Activated T-helper 1 cell treated with anti-CD3 and anti-CD28 coated beads, Interleukin-12 subunit alpha, Interleukin-12 subunit beta, Interleukin-2, Interleukin-4 antibody, amounts not matched to agents 30 ng/mL and 10 ng/mL and 1 ng/mL, durations not matched to agents 14 hours and 24 hours and 36 hours (primary cell): ENCODE measurements at regions of chr7 and their contacts with region 1.

Region 1: DNA sequence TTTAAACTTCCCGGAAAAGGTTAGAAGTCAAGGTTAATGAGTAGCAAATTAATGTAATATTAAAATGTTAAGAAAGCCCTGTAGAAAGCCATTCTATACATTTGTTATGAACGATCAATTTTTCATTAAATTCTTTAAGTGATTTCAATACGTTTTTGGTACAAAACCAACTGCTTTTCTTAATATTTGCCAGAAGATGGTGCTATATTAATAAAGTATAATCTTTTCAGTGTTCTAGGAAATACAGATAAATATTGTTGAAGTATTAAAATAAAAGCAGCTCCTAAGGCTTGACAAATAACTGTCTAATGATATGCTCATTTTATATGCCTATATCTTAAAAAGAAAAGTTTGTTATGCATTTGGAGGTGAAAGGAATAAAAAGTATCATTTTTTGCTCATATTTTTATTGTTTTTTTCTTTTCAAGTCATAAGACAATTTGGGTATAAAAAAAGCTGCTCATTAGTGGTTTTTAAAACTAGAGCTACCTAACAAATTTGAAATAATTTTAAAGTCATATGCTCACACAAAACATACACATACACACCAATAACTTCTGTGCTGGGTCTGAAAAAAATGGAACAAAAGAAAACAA is 130.3 kb upstream of the POT1 start:
- DNase-seq: no peak
- H3K4me3 Mint-ChIP-seq: no peak overlapping the region
- H3K27ac Mint-ChIP-seq: no peak overlapping the region
- H3K4me1 Mint-ChIP-seq: no peaks in the 10 kb centered on the region
- H3K27me3 Mint-ChIP-seq: peaks cover 2% of the 10 kb centered on the region

Region 2: DNA sequence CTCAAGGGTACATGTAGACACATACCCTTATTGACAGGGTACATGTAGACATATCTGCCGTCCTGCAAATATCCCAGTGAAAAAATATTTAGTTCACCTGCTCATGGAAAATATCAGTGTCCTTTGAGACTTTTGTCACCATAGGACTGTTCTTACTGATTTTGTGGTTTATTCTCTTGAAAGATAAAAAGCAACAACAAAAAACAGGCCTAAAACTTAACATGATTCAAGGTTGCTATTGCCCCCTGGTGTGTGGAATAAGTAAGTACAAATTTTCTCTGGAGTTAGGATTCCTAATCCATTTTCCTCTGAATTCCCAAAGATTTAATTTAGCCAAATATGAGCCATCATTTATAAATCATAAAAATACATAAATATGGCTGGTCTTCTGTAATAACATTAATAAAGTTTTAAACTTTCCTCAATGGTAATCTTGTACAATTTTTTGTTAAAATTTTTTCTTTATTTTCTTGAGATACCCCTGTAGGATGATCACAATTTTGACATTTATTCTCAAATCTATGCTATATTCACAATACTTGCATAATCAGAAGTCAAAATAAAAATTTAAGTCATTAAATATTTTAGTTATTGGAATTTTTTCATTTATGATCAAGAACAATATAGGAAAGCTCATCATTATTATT is 611.1 kb after region 1 on chr7:
- intact Hi-C with region 1: loop called (anchors 2 kb)
- DNase-seq: no peak
- H3K4me3 Mint-ChIP-seq: no peak overlapping the region
- H3K27ac Mint-ChIP-seq: no peak overlapping the region
- H3K4me1 Mint-ChIP-seq: no peaks in the 10 kb centered on the region
- H3K27me3 Mint-ChIP-seq: no peaks in the 10 kb centered on the region

Region 3: GRCh38 chr7:125857606-125858005 is 797.6 kb after region 1 on chr7:
- intact Hi-C with region 1: no loop called
- DNase-seq: no peak
- H3K4me3 Mint-ChIP-seq: no peak overlapping the region
- H3K27ac Mint-ChIP-seq: no peak overlapping the region
- H3K4me1 Mint-ChIP-seq: no peaks in the 10 kb centered on the region
- H3K27me3 Mint-ChIP-seq: no peaks in the 10 kb centered on the region